BJ (cell line): ENCODE measurements at regions of chr1 and their contacts with region 1.

Region 1: DNA sequence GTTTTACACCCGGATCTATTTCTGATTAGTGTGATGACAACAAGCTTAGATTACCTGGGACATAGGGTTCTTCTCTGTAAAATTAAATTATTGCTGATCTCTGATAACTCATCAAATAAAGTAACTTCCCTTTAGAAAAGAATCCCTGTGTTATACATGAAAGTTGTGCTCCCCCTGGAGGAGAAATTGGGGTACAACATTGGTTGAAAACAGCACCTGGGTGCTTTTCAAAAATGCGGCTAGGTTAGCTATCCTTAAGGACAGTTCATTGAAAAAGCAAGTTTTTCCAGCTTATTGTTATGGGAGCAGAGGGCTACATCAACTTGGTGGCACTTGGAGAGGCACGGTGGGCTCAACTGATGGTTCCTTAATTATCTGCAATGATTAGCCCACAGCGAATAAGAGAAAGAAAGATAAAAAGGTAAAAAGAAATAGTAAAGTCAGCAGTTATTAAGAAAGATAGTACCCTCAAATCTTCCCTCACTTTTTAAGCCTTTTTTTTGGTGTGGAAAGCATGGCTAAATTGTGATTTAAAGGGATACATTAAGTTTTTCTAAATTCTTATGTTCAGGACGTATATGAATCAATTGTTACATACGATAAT is 97.8 kb downstream of the FMN2 start:
- DNase-seq: no peak
- H3K4me3 ChIP-seq: no peak overlapping the region
- H3K27me3 ChIP-seq: no peaks in the 10 kb centered on the region
- CTCF ChIP-seq: peak; percentile 77

Region 2: GRCh38 chr1:239922778-239923522 is 266.5 kb before region 1 on chr1:
- CTCF ChIA-PET with region 1: no interaction called
- POLR2A ChIA-PET with region 1: no interaction called
- DNase-seq: no peak
- H3K4me3 ChIP-seq: no peak overlapping the region
- H3K27me3 ChIP-seq: no peaks in the 10 kb centered on the region
- CTCF ChIP-seq: no peak

Region 3: GRCh38 chr1:240027059-240027462 is 162.4 kb before region 1 on chr1:
- CTCF ChIA-PET with region 1: interaction called, 23 read pairs
- POLR2A ChIA-PET with region 1: no interaction called
- DNase-seq: no peak
- H3K4me3 ChIP-seq: no peak overlapping the region
- H3K27me3 ChIP-seq: no peaks in the 10 kb centered on the region
- CTCF ChIP-seq: peak; percentile 90

Region 4: DNA sequence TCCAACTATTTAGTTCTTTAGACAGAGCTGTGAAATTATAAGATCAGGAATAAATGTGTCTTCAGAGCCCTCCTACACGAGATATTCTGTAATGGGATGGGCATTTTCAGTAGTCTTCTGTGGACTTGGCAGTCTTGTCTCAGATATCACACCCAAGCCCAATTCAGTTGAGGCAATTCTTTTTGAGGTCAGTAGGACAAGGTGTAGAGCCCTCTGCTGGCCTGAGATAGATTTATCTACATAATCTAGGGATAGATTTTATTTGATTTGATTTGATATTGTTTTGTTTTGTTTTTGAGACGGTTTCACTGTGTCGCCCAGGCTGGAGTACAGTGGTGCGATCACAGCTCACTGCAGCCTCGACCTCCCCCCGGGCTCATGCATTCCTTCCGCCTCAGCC is 20.3 kb before region 1 on chr1:
- CTCF ChIA-PET with region 1: interaction called, 11 read pairs
- POLR2A ChIA-PET with region 1: no interaction called
- DNase-seq: no peak
- H3K4me3 ChIP-seq: no peak overlapping the region
- H3K27me3 ChIP-seq: no peaks in the 10 kb centered on the region
- CTCF ChIP-seq: peak; percentile 26

Region 5: GRCh38 chr1:240602189-240602588 is 412.7 kb after region 1 on chr1:
- CTCF ChIA-PET with region 1: interaction called, 12 read pairs
- POLR2A ChIA-PET with region 1: interaction called, 5 read pairs
- DNase-seq: no peak
- H3K4me3 ChIP-seq: no peak overlapping the region
- H3K27me3 ChIP-seq: no peaks in the 10 kb centered on the region
- CTCF ChIP-seq: peak; percentile 21; the same call in 1 of the 2 replicates

Region 6: DNA sequence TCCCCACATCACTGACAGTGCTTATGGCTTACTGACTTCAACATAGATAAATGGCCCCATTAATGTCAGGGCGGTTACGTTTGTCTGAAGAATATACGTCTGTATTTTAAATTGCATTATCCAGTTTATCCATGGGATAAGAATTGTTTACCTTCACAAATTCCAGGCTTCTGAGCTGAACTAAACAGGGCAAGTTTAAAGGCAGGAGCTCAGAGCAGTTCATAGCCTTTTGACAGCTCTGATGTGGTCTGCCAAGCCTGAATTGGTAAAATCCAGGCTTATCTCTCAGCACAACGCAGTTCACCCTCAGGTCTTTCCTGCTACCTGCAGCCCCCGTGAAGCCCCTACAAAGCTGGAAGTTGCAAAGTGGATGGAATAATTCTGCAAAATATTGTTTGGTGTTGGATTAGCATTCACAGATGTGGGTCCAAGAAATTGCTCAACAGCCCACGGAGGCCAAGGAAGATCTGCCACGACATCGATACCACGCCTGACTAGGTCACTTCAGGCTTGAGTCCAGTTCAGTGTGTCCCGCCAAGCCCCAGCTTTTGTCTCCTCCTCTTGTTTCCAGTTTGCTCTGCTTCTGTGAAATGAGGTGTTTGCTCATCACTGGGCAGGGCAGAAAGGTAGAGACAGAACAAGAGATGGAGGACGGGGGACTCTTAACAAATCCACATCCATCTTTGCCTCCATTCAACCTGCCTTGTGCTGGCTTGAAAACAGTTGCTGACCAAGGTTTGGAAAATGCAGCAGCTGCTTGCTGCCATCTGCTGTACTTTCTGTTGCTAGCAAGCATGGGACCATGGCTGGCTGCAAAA is 502.2 kb after region 1 on chr1:
- CTCF ChIA-PET with region 1: interaction called, 21 read pairs
- POLR2A ChIA-PET with region 1: no interaction called
- DNase-seq: no peak
- H3K4me3 ChIP-seq: no peak overlapping the region
- H3K27me3 ChIP-seq: no peaks in the 10 kb centered on the region
- CTCF ChIP-seq: peak; percentile 93

Region 7: GRCh38 chr1:240739754-240740153 is 550.3 kb after region 1 on chr1:
- CTCF ChIA-PET with region 1: no interaction called
- POLR2A ChIA-PET with region 1: no interaction called
- DNase-seq: no peak
- H3K4me3 ChIP-seq: no peak overlapping the region
- H3K27me3 ChIP-seq: no peaks in the 10 kb centered on the region
- CTCF ChIP-seq: no peak